Ovary (tissue), 10 donors: ENCODE measurements at regions of chr4 and their contacts with region 1.

Region 1: DNA sequence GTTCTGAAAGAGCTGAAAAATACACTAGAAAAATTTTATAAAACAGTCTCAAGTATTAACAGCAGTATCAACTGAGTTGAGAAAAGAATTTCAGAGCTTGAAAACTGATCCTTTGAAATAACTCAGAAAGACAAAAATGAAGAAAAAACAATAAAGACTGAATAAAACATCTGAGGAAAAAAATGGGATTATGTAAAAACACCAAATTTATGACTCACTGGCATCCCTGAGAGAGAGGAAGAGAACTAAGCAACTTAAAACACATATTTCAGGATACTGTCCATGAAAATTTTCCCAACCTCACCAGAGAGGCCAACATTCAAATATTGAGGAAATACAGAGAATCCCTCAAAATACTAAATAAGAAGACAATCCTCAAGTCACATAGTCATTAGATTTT is 22.9 kb downstream of the PABPC4L start:
- DNase-seq: no peak
- H3K4me3 ChIP-seq: no peak overlapping the region
- H3K27ac ChIP-seq: no peak overlapping the region
- H3K4me1 ChIP-seq: no peaks in the 10 kb centered on the region
- H3K27me3 ChIP-seq: no peaks in the 10 kb centered on the region
- CTCF ChIP-seq: no peak
- EP300 ChIP-seq: no peak
- POLR2A ChIP-seq: no peak

Region 2: DNA sequence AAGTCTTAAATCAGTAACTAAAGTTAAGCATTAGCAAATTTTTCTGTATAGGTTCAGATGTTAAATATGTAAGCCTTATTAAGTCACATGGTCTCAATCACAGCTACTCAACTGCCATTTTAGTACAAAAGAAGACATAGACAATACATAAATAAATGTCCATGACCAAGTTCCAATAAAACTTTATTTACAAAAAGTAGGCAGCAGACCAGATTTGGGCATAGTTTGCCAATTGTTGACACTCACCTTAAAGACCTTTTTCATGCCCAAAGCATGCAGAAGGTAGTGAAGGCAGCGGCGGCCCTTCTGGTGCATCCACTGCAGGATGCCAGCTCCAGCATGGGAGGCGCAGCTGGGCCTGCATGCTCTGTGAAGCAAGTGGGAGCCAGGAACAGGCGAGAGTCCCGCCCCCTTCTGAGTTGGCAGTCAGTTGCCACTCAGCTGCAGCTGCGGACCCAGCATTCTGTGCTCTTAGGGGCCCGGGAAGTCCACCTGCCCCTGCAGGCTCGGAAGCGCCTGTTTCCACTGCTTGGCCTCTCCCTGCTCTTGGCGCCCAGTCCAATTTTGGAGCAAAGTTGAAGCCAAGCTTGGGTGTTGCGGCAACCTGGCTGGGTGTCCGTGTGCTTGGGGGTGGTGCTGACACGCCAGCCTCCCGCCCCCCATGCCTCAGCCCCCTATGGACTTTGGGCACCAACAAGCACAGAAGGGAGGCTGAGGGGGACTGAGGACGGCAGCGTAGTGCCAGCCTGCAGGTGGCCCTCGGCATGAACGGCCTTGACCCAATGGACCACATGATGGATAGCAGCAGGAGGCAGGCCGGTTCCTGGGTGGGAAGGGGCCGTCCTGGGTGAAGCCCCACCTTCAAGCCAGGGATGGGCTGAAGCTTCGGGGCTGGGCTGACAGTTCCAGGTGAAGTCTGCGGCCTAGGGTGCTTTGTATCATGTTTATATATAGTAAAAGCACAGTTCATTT is 65.3 kb after region 1 on chr4:
- intact Hi-C with region 1: no loop called
- DNase-seq: peak in 1 of 5 donors; percentile 4
- H3K4me3 ChIP-seq: no peak overlapping the region
- H3K27ac ChIP-seq: no peak overlapping the region
- H3K4me1 ChIP-seq: no peaks in the 10 kb centered on the region
- H3K27me3 ChIP-seq: no peaks in the 10 kb centered on the region
- CTCF ChIP-seq: no peak
- EP300 ChIP-seq: no peak
- POLR2A ChIP-seq: no peak

Region 3: DNA sequence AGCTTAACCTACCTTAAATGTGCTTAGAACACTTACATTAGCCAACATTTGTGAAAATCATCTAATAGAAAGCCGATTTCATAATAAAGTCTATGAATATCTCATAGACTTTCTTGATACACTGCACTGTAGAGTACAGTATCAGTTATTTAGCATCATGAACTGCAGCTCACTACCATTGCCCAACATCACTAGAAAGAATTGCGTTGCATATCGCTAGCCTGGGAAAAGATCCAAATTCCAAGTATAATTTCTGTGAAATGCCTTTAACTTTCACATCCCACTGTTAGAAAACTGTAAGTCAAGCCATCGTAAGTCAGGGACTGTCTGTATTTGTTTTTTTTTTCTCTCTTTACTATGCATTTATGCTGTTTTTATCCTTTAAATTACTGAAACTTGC is 941.5 kb after region 1 on chr4:
- intact Hi-C with region 1: loop called in 1 of 4 experiments (anchors 5 kb)
- DNase-seq: no peak
- H3K4me3 ChIP-seq: no peak overlapping the region
- H3K27ac ChIP-seq: no peak overlapping the region
- H3K4me1 ChIP-seq: no peaks in the 10 kb centered on the region
- H3K27me3 ChIP-seq: no peaks in the 10 kb centered on the region
- CTCF ChIP-seq: no peak
- EP300 ChIP-seq: no peak
- POLR2A ChIP-seq: no peak